ENCODE measurements at regions of chrX and their contacts with region 1.

Region 1: GRCh38 chrX:17242470-17242869 is 132.5 kb upstream of the NHS start:
- DNase-seq: peak; percentile 52
- H3K4me3 ChIP-seq: no peak overlapping the region
- H3K27ac ChIP-seq: no peak overlapping the region
- H3K4me1 ChIP-seq: no peaks in the 10 kb centered on the region
- H3K27me3 ChIP-seq: no peaks in the 10 kb centered on the region; the same call in 1 of the 2 replicates

Region 2: GRCh38 chrX:17361620-17362019 is 119.2 kb after region 1 on chrX:
- in situ Hi-C with region 1: loop called (anchors 10 kb)
- DNase-seq: no peak
- H3K4me3 ChIP-seq: no peak overlapping the region
- H3K27ac ChIP-seq: no peak overlapping the region
- H3K4me1 ChIP-seq: no peaks in the 10 kb centered on the region
- H3K27me3 ChIP-seq: no peaks in the 10 kb centered on the region

Region 3: DNA sequence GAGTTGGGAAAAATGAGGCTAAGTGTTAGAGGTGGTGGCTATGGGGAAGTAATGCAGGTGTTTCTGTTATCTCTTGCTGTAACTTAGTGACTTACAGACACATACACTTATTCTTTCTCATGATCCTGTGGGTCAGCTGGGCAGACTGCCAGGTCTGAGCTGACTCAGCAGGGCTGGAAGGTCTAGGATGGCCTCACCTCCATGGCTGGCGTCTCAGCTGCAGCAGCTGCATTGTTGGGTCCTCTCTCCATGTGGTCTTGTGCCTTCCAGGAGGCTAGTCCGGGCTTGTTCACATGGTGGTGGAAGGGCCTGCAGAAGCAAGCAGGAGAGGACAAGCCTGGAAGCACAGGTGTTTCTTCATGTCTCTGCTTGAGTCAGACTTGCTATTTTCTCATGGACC is 305.2 kb after region 1 on chrX:
- in situ Hi-C with region 1: loop called (anchors 25 kb)
- DNase-seq: peak; percentile 75
- H3K4me3 ChIP-seq: no peak overlapping the region
- H3K27ac ChIP-seq: no peak overlapping the region
- H3K4me1 ChIP-seq: no peaks in the 10 kb centered on the region
- H3K27me3 ChIP-seq: no peaks in the 10 kb centered on the region

Region 4: DNA sequence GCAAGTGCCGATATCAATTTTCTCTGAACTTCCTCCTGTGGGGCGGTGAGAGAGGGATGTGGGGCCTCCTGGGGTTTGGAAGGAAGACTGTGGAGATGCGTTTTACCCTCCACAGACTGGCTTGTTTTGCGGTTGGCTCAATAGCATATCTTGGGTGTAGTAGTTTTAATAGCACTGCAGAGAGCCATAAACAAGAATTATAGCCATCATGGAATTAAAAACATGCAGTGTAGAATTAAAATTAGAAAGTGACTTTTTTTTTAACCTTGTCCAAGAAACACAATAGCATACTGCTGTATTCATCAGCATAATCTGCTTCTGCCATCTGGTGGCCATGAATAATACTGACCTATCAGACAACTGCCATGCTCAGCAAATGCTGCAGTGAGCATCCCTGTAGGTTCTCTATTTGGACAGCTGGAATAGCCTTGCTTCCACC is 447.5 kb after region 1 on chrX:
- in situ Hi-C with region 1: loop called (anchors 10 kb)
- DNase-seq: peak; percentile 66
- H3K4me3 ChIP-seq: no peak overlapping the region
- H3K27ac ChIP-seq: no peak overlapping the region
- H3K4me1 ChIP-seq: peaks cover 4% of the 10 kb centered on the region; the same call in 1 of the 2 replicates
- H3K27me3 ChIP-seq: no peaks in the 10 kb centered on the region